ENCODE measurements at regions of chr20 and their contacts with region 1.

Region 1: DNA sequence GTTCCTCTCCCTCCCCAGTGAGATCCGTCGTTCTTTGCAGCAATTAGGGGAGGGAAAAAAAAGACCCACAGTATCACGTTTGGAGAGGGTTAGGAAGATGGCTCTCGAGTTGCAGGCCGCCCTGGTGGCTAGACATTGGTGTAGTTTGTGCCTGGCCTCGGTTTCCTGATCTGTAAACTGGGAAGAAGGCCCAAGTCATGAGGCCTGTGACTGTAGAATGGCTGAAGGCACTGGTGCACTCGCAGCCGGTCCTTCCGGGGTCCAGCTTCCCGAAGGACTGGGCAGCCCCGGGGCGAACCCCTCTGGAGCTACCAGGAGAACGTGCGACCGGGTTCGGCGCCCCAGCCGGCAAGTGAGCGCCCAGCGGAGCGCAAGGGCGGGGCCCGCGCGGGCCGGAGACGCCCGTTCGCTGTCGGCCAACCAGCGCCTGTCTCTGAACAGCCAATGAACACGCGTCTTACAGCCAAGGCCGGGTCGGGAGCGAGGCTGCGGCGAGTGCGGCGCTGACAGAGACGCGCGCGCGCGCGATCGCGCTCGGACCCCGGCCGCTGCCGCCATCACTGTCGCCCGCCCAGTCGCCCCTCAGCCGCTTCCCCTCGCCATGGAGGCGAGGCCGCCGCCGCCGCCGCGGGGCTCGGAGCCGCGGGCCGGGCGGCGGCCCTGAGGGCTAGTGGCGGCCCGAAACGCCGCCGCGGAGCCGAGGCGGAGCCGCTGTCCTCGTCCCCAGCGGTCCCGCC is at the start of gene PTPRA:
- DNase-seq: peak; percentile 98
- H3K4me3 Mint-ChIP-seq: peak within 1 kb of the TSS; percentile 96
- H3K27ac Mint-ChIP-seq: peak within 1 kb of the TSS; percentile 96
- H3K4me1 Mint-ChIP-seq: peaks cover 48% of the 10 kb centered on the region
- H3K27me3 Mint-ChIP-seq: peaks cover 2% of the 10 kb centered on the region
- total RNA-seq, gene PTPRA: 66.5 and 71.5 TPM in 2 replicates

Region 2: DNA sequence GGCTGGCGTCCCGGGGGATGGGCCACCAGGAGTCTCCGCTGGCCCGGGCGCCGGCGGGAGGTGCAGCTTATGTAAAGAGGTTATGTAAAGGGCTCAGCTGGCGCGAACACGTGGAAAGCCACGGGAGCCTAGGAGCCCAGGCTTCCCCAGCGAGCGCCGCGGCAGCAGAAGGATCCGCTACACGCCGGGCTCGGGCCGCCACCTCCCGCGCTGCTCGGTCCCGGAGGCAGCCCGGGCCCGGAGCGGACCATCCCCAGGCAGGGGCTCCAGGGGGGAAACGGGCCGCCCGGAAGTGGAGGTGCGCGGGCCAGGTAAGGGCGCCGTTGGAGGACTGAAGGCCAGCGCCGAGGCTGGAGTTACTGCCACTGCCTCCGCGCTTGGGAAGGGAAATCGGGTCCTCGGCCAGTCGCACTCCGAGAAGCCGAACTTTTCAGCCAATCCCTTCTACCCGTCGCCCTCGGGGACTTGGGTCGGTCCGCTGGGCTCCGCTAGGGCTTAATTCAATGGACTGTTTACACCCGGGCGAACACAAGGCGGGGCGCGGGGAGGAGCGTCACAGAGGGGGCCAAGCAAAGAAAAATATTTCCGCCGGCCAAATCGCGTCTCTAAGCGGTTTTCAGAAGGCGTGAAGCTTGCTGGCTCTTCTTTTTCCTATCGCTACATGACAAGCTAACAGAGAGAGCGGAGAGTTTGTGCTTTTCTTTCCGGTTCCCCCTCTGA is 771.2 kb before region 1 on chr20:
- intact Hi-C with region 1: loop called (anchors 10 kb)
- DNase-seq: peak; percentile 96
- H3K4me3 Mint-ChIP-seq: peak overlapping the region; percentile 97
- H3K27ac Mint-ChIP-seq: peak overlapping the region; percentile 99
- H3K4me1 Mint-ChIP-seq: peaks cover 39% of the 10 kb centered on the region
- H3K27me3 Mint-ChIP-seq: peaks cover 11% of the 10 kb centered on the region

Region 3: GRCh38 chr20:2840138-2840966 is 32.8 kb before region 1 on chr20 and contains the starts of genes PCED1A and VPS16:
- intact Hi-C with region 1: loop called (anchors 1 kb)
- DNase-seq: peak; percentile 97
- H3K4me3 Mint-ChIP-seq: peak within 1 kb of the TSS; percentile 91
- H3K27ac Mint-ChIP-seq: peak within 1 kb of the TSS; percentile 91
- H3K4me1 Mint-ChIP-seq: peaks cover 20% of the 10 kb centered on the region
- H3K27me3 Mint-ChIP-seq: peaks cover 1% of the 10 kb centered on the region
- total RNA-seq, gene PCED1A: 23.4 and 26.1 TPM in 2 replicates
- total RNA-seq, gene VPS16: 44.3 and 44.9 TPM in 2 replicates

Region 4: GRCh38 chr20:2972126-2972525 is 98.9 kb after region 1 on chr20:
- intact Hi-C with region 1: no loop called
- DNase-seq: no peak
- H3K4me3 Mint-ChIP-seq: no peak overlapping the region
- H3K27ac Mint-ChIP-seq: no peak overlapping the region
- H3K4me1 Mint-ChIP-seq: peaks cover 3% of the 10 kb centered on the region
- H3K27me3 Mint-ChIP-seq: no peaks in the 10 kb centered on the region

Region 5: DNA sequence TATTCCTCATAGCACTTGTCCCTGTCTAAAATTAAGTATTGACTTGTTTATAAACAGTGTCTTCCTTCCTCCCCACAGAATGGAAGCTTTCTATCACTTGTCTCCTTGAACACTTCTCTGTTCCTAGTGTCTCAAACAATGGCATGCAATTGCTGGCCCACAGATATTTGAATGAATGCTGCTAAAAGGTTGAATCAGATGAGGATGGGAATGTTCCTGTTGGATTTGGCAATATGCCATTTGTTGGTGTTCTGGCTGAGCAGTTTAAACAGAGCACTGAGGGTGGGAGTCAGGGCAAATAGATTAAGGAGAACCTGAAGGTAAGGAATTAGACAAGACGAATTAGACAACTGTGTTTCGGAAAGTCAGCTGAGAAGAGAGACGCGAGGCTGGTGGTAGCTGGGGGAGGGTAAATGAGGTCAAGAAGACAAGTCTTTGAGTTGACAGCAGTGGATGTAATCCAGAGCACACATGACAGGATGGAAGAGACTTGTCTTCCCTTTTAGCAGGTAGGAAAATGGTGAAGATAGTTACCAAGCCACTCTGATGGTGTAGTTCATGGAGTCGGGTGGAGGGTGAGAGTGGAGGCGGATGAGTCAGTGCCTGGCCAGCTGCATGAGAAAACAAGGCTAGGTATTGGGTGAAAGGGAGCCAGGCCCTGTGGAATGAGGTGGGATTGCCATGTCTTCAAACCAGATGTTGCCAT is 111.9 kb after region 1 on chr20:
- intact Hi-C with region 1: loop called (anchors 1 kb)
- DNase-seq: no peak
- H3K4me3 Mint-ChIP-seq: no peak overlapping the region
- H3K27ac Mint-ChIP-seq: no peak overlapping the region
- H3K4me1 Mint-ChIP-seq: peaks cover 37% of the 10 kb centered on the region
- H3K27me3 Mint-ChIP-seq: no peaks in the 10 kb centered on the region

Region 6: DNA sequence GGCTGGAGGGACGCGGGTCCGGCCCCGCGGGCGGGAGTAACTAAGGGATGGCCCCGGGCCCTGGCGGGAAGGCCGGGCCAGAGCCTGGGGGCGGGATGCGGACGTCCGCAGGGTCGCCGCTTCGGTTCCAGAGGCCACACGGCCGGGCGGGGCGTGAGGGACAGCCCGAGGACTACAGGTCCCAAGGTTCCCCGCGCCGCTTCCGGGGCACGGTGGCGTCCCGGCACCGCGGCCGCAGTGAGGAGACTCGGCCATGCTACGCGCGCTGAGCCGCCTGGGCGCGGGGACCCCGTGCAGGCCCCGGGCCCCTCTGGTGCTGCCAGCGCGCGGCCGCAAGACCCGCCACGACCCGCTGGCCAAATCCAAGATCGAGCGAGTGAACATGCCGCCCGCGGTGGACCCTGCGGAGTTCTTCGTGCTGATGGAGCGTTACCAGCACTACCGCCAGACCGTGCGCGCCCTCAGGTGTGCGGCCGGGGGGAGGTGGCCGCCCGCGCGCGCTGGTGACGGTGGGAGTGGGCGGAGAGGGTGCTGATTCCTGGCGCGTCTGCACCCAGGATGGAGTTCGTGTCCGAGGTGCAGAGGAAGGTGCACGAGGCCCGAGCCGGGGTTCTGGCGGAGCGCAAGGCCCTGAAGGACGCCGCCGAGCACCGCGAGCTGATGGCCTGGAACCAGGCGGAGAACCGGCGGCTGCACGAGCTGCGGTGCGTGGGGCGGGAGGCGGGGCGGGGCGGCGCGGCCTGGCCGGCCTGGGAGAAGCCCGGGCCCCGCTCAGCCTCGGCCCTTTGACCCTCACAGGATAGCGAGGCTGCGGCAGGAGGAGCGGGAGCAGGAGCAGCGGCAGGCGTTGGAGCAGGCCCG is 172.9 kb after region 1 on chr20 and contains the start of gene MRPS26:
- intact Hi-C with region 1: loop called (anchors 1 kb)
- DNase-seq: peak; percentile 96
- H3K4me3 Mint-ChIP-seq: peak within 1 kb of the TSS; percentile 93
- H3K27ac Mint-ChIP-seq: peak within 1 kb of the TSS; percentile 87
- H3K4me1 Mint-ChIP-seq: peaks cover 16% of the 10 kb centered on the region
- H3K27me3 Mint-ChIP-seq: no peaks in the 10 kb centered on the region
- total RNA-seq, gene MRPS26: 123 and 130 TPM in 2 replicates

Measured in activated CD4-positive, alpha-beta T cell treated with anti-CD3 and anti-CD28 coated beads, Interleukin-2, amount 10 ng/mL, durations not matched to agents 24 days and 14 days (primary cell).